ENCODE measurements at regions of chr16 and their contacts with region 1.

Region 1: GRCh38 chr16:81444448-81445121 is at the start of gene CMIP:
- DNase-seq: peak; percentile 97
- H3K4me3 ChIP-seq: peak within 1 kb of the TSS; percentile 52 to 96 (median 88)
- H3K27ac ChIP-seq: peak within 1 kb of the TSS; percentile 48 to 97 (median 92)
- H3K4me1 ChIP-seq: peaks cover 15 to 63% (median 38%) of the 10 kb centered on the region in 6 donors
- H3K27me3 ChIP-seq: no peaks in the 10 kb centered on the region
- CTCF ChIP-seq: no peak
- POLR2A ChIP-seq: peak in 1 of 3 donors; percentile 22
- total RNA-seq, gene CMIP: 49.9 to 107 (median 67.1) TPM

Region 2: GRCh38 chr16:81366316-81366932 is 78.2 kb before region 1 on chr16:
- intact Hi-C with region 1: no loop called
- DNase-seq: no peak
- H3K4me3 ChIP-seq: no peak overlapping the region
- H3K27ac ChIP-seq: no peak overlapping the region
- H3K4me1 ChIP-seq: peaks cover 0 to 5% (median 0%) of the 10 kb centered on the region in 6 donors
- H3K27me3 ChIP-seq: no peaks in the 10 kb centered on the region
- CTCF ChIP-seq: peak; percentile 50 to 82 (median 74)
- POLR2A ChIP-seq: no peak

Region 3: DNA sequence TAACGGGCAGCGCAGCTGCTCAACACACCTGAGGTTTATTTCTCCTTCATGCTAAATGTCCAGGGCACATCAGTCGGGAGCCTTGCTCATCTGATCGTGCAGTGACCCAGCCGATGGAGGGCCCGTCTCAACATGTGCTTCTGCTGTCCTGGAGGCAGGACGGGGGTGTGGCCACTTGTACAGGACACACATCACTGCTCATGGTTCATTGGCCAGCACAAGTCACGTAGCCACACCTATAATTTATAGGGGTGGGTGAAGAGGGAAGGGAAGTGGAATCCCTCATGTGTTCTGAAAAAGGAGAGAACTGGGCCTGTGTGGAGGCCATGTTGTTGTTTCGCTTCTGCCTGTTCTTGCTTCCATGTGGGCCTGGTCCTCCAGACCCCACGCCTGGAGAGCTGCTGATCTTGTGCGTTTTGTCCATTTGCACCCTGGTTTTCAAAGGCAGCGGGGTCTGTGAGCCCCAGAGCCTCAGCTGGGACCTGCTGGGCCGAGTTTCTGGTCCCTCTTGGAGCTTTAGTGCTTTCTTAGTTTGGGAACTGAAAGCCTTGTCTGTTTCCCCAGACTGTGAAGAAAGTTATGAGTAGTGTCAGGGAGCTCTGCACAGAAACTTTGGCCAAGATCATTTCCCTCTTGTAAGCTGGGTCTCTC is 60.6 kb after region 1 on chr16:
- intact Hi-C with region 1: no loop called
- DNase-seq: peak; percentile 85
- H3K4me3 ChIP-seq: no peak overlapping the region
- H3K27ac ChIP-seq: peak overlapping the region; percentile 9 to 82 (median 54)
- H3K4me1 ChIP-seq: peaks cover 16 to 96% (median 63%) of the 10 kb centered on the region in 6 donors
- H3K27me3 ChIP-seq: no peaks in the 10 kb centered on the region
- CTCF ChIP-seq: no peak
- POLR2A ChIP-seq: no peak

Region 4: GRCh38 chr16:81616321-81617055 is 171.9 kb after region 1 on chr16:
- intact Hi-C with region 1: loop called (anchors 10 kb)
- DNase-seq: peak; percentile 95
- H3K4me3 ChIP-seq: peak overlapping the region in 1 of 8 donors; percentile 34
- H3K27ac ChIP-seq: peak overlapping the region; percentile 67 to 88 (median 74)
- H3K4me1 ChIP-seq: peaks cover 16 to 62% (median 37%) of the 10 kb centered on the region in 6 donors
- H3K27me3 ChIP-seq: no peaks in the 10 kb centered on the region
- CTCF ChIP-seq: no peak
- POLR2A ChIP-seq: no peak

Region 5: GRCh38 chr16:82138528-82139284 is 694.1 kb after region 1 on chr16:
- intact Hi-C with region 1: no loop called
- DNase-seq: no peak
- H3K4me3 ChIP-seq: no peak overlapping the region
- H3K27ac ChIP-seq: no peak overlapping the region
- H3K4me1 ChIP-seq: no peaks in the 10 kb centered on the region
- H3K27me3 ChIP-seq: no peaks in the 10 kb centered on the region
- CTCF ChIP-seq: no peak
- POLR2A ChIP-seq: no peak